Right ventricle myocardium inferior (tissue), 1 donor: ENCODE measurements at regions of chr10 and their contacts with region 1.

Region 1: GRCh38 chr10:51422311-51423120 is 276.9 kb downstream of the CSTF2T start:
- DNase-seq: peak; percentile 70
- ATAC-seq: peak; percentile 68

Region 2: DNA sequence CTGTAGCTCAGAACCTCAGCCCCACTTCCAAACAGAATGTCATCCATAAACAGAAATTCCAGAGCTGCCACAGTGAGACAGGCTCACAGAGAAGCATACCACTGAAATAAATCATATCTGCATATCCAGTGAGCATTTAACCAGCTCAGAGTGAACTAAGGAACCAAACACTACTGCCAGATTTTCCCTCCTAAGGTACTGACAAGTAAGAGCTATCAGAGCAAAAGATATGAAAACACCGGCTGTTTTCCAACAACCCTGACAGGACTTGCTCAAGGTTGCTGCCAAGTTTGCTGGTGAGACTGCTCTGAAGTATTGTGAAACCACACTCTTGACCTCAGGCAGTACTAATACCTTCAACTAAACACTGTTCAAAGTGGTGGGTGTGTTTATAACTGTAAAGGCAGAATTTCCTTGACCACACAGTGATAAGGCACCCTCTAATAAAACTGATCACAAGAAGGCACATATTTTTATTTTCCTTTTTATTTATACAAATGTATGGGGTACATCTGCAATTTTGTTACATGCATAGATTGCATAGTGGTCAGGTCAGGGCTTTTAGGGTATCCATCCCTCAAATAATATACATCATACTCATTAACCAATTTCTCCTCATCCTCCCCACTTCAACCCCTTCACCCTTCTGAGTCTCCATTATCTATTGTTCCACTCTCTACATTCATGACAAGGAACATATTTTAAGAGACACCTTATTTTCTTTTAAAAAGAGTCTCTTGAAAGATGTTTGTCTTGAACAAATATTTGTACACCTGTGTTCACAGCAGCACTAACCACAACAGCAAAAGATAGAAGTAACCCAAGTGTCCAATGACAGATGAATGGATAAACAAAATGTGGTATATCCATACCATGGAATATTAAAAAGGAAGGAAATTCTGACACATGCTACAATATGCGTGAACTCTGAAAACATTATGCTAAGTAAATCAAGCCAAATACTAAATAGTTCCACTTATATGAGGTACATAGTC is 817.0 kb before region 1 on chr10:
- intact Hi-C with region 1: no loop called
- DNase-seq: no peak
- ATAC-seq: peak; percentile 92

Region 3: GRCh38 chr10:51074238-51075028 is 348.1 kb before region 1 on chr10 and contains the start of gene PRKG1:
- intact Hi-C with region 1: loop called (anchors 5 kb)
- DNase-seq: peak; percentile 86
- ATAC-seq: peak; percentile 95
- total RNA-seq, gene PRKG1: 28.1 TPM

Region 4: GRCh38 chr10:51231754-51232153 is 190.8 kb before region 1 on chr10:
- intact Hi-C with region 1: loop called (anchors 10 kb)
- DNase-seq: no peak
- ATAC-seq: no peak

Region 5: DNA sequence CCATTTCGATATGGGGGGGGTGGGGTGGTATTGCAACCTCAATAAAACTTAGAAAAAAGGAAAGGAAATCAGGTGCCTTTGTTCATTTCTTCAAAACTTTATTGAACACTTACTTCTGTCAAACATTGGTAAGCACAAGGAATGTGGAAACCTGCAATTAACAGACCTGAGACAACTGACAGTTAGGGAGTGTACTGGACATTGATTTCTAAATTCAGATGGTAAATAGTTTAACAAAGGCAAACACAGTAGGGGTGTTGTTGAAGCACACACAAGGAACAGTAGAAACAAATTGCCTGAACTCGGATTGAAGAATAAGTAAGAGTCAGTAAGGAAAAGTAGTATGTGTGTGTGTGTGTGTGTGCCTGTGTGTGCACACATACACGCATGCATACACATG is 168.3 kb after region 1 on chr10:
- intact Hi-C with region 1: no loop called
- DNase-seq: no peak
- ATAC-seq: no peak

Region 6: GRCh38 chr10:51699475-51700227 is 277.1 kb after region 1 on chr10 and contains the start of gene CSTF2T:
- intact Hi-C with region 1: loop called (anchors 10 kb)
- DNase-seq: peak; percentile 87
- ATAC-seq: peak; percentile 96
- total RNA-seq, gene CSTF2T: 21.3 TPM